Left cardiac atrium (tissue), 4 donors: ENCODE measurements at regions of chr6 and their contacts with region 1.

Region 1: GRCh38 chr6:122839477-122839876 is 50.4 kb downstream of the SMPDL3A start:
- DNase-seq: peak; percentile 25
- ATAC-seq: peak; percentile 47 to 67

Region 2: GRCh38 chr6:122730775-122731386 is 108.6 kb before region 1 on chr6:
- intact Hi-C with region 1: loop called in 1 of 2 experiments (anchors 1 kb)
- DNase-seq: no peak
- ATAC-seq: no peak

Region 3: GRCh38 chr6:122740936-122741335 is 98.5 kb before region 1 on chr6:
- intact Hi-C with region 1: loop called in 1 of 2 experiments (anchors 5 kb)
- DNase-seq: no peak
- ATAC-seq: no peak

Region 4: GRCh38 chr6:122947355-122947754 is 107.9 kb after region 1 on chr6:
- intact Hi-C with region 1: no loop called
- DNase-seq: no peak
- ATAC-seq: no peak

Region 5: DNA sequence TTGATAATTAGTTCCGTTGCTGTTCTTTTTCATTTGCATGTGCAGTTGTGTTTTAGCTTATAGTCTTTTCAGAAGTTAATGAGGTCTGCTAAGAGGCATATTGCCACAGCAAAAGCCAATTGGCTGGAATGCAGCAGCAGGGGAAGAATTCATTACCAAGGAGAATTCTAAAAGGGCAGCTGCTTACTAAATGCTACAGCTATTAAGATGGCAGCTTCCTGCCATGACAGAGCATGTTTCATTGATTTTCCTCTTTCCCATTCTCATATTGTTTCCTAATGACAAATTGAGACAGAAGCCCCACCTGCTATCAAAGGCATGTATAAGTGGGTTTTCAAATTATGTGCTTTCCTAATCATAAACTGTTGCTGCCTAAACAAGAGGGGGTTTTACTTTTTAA is 223.2 kb after region 1 on chr6:
- intact Hi-C with region 1: no loop called
- DNase-seq: no peak
- ATAC-seq: no peak